GM18951 (cell line): ENCODE measurements at regions of chr6 and their contacts with region 1.

Region 1: GRCh38 chr6:33069021-33069738 is 4.3 kb downstream of the HLA-DPA1 start:
- POLR2A ChIP-seq: no peak

Region 2: DNA sequence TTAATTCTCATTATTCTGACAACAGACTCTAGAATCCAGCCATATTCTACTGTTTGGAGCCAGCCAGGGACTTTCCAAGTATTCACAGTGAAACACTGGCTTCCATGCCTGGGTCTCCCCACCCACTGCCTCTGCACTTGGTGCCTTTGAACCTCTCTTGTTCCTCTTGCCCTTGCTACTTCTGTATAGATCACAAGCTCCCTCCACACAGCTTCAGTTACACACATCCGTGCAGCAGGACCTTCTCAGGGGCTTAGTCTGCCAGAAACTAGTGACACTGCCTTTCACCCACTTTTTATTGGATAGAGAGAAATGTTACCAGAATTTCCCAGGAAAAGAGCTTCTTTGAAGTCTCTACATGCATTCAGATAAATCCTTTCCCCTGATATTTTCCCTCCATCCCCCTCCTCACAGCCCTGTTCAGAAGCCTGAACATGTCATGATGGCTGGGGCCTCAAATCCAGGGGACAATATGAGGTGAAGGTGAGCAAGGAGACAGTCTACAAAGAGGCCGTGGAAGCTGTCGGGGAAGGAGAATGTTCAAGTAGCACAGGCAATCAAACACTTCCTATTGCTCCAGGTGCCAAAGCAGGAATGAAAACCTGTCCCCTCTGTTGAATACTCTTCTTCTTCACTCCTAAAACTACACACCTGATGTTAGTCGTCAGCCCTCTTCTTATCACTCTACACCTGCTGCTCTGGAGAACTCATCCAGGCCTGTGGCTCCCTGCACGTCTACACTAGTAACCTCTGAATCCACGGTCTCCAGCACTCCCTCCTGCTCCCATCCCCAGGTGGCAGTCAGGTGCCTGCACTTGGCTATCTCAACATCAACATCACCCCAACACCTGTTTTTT is 39.6 kb before region 1 on chr6:
- in situ Hi-C with region 1: loop called (anchors 5 kb)
- POLR2A ChIP-seq: peak; percentile 56